GM10248 (cell line): ENCODE measurements at regions of chr13 and their contacts with region 1.

Region 1: DNA sequence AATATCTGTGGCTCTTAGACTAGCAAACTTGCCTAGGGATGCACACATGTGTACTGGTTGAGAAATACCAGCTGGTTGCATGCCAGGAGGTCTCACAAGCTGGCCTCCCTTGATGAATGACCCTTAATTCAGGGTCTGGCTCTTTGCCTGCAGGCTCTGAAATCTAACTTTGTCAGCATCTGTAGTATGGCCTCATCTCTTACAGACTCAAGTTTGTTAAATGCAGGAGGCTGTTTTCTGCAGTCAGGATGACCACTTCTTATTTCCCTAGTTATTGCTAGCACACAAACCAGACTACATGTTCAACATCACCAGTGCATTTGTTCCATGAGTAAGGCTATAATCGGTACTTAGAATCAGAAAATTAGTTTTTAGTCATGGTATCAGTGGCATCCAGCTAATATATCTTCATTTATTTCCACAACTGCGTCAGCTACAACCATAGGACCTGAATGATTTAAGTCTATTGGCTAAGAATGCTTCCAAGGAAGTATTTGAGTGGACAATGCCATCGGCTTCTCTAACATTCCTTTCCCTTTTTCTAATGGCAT is 23.3 kb upstream of the POSTN start:
- DNase-seq: no peak
- CTCF ChIP-seq: no peak

Region 2: GRCh38 chr13:37608750-37609339 is 13.0 kb before region 1 on chr13:
- CTCF ChIA-PET with region 1: no interaction called
- POLR2A ChIA-PET with region 1: no interaction called
- DNase-seq: no peak
- CTCF ChIP-seq: peak; percentile 25

Region 3: DNA sequence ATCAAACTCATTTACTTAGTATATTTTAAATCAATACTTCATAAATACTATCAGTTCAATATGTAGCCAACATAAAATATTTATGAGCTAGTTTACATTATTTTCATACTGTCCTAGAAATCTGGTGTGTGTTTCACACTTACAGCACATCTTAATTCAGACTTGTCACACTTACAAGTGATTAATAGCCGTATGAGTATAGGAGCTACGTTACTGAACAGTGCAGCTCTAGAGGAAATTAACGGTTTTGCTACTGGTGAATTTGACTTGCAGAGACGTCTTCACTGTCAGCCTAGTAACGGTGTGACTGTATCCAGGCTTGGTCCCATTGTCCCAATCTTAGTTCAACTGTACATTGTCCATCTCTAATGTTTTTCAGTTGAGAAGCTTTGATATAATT is 10.4 kb after region 1 on chr13:
- CTCF ChIA-PET with region 1: interaction called, 15 read pairs
- POLR2A ChIA-PET with region 1: no interaction called
- DNase-seq: no peak
- CTCF ChIP-seq: no peak